CD4-positive, alpha-beta T cell (primary cell): ENCODE measurements at regions of chr16 and their contacts with region 1.

Region 1: GRCh38 chr16:75074920-75075687 is 41.5 kb downstream of the LDHD start:
- DNase-seq: peak; percentile 64 to 95 (median 80)
- ATAC-seq: peak; percentile 95
- H3K4me3 ChIP-seq: peak overlapping the region; percentile 32
- H3K4me3 Mint-ChIP-seq: peak overlapping the region; percentile 35
- H3K27ac ChIP-seq: peak overlapping the region; percentile 1 to 41
- H3K27ac Mint-ChIP-seq: peak overlapping the region; percentile 88
- H3K4me1 ChIP-seq: peaks cover 54% of the 10 kb centered on the region
- H3K4me1 Mint-ChIP-seq: peaks cover 66% of the 10 kb centered on the region
- H3K27me3 ChIP-seq: no peaks in the 10 kb centered on the region
- H3K27me3 Mint-ChIP-seq: no peaks in the 10 kb centered on the region
- CTCF ChIP-seq: no peak

Region 2: GRCh38 chr16:74984535-74985296 is 90.4 kb before region 1 on chr16 and contains the start of gene WDR59:
- CTCF ChIA-PET with region 1: interaction called, 6 read pairs
- POLR2A ChIA-PET with region 1: interaction called, 12 read pairs
- intact Hi-C with region 1: no loop called
- DNase-seq: peak; percentile 94 to 100 (median 98)
- ATAC-seq: peak; percentile 98
- H3K4me3 ChIP-seq: peak within 1 kb of the TSS; percentile 100
- H3K4me3 Mint-ChIP-seq: peak within 1 kb of the TSS; percentile 96
- H3K27ac ChIP-seq: peak within 1 kb of the TSS; percentile 44 to 61
- H3K27ac Mint-ChIP-seq: peak within 1 kb of the TSS; percentile 84
- H3K4me1 ChIP-seq: peaks cover 23% of the 10 kb centered on the region
- H3K4me1 Mint-ChIP-seq: peaks cover 23% of the 10 kb centered on the region
- H3K27me3 ChIP-seq: no peaks in the 10 kb centered on the region
- H3K27me3 Mint-ChIP-seq: no peaks in the 10 kb centered on the region
- CTCF ChIP-seq: no peak
- total RNA-seq, gene WDR59: 60.2 to 67.2 TPM

Region 3: GRCh38 chr16:75064403-75065148 is 10.5 kb before region 1 on chr16:
- CTCF ChIA-PET with region 1: interaction called, 3 read pairs
- POLR2A ChIA-PET with region 1: interaction called, 26 read pairs
- intact Hi-C with region 1: no loop called
- DNase-seq: peak in 5 of 14 experiments; percentile 6 to 47 (median 41)
- ATAC-seq: peak; percentile 55
- H3K4me3 ChIP-seq: peak overlapping the region; percentile 2
- H3K4me3 Mint-ChIP-seq: peak overlapping the region; percentile 72
- H3K27ac ChIP-seq: no peak overlapping the region
- H3K27ac Mint-ChIP-seq: peak overlapping the region; percentile 84
- H3K4me1 ChIP-seq: peaks cover 35% of the 10 kb centered on the region
- H3K4me1 Mint-ChIP-seq: peaks cover 72% of the 10 kb centered on the region
- H3K27me3 ChIP-seq: no peaks in the 10 kb centered on the region
- H3K27me3 Mint-ChIP-seq: no peaks in the 10 kb centered on the region
- CTCF ChIP-seq: no peak

Region 4: DNA sequence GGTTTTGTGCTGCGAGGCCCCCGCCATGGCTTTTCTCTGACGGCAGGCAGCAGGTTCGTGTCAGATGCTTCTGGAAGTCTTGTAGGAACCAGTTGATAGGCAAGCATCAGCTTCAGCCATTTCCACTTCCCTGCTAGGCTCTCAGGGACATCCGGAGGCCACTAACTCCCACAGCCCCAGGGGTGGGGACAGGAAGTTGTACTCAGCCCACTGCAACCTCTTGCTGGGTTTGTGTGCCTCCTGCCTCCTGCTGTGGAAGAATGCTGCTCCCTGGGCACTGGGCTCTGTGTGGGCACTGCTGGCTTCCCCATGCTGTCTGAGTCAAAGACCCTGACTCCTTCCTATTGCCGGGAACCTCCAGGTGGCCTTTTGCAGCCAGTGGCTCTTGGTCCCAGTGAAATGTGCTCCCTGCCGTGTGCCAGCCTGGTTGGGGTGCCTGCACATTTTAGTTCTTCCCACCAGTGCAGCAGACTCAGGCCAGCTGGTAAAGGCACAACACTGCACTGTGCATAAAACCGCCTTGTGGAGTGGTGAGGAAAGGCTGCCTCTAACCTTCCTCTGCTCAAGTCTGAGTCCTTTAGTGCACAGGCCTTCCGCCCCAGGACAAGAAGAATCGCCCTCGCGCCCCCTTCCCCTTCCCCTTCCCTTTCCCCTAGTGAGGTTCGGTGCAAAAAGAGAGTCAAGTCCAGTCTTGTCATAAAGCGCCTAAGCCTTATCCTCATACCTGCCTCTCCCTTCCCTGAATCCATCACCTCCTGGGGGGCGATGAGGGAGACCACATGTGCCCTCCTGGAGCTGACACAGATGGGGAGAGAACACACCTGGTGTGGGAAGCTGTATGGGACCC is 24.9 kb after region 1 on chr16:
- CTCF ChIA-PET with region 1: interaction called, 4 read pairs
- POLR2A ChIA-PET with region 1: interaction called, 14 read pairs
- intact Hi-C with region 1: loop called (anchors 1 to 2 kb)
- DNase-seq: peak in 10 of 14 experiments; percentile 20 to 77 (median 44)
- ATAC-seq: peak; percentile 30
- H3K4me3 ChIP-seq: no peak overlapping the region
- H3K4me3 Mint-ChIP-seq: peak overlapping the region; percentile 50
- H3K27ac ChIP-seq: peak overlapping the region; percentile 66
- H3K27ac Mint-ChIP-seq: peak overlapping the region; percentile 85
- H3K4me1 ChIP-seq: peaks cover 46% of the 10 kb centered on the region
- H3K4me1 Mint-ChIP-seq: peaks cover 52% of the 10 kb centered on the region
- H3K27me3 ChIP-seq: no peaks in the 10 kb centered on the region
- H3K27me3 Mint-ChIP-seq: no peaks in the 10 kb centered on the region
- CTCF ChIP-seq: no peak

Region 5: GRCh38 chr16:75148311-75149195 is 73.4 kb after region 1 on chr16 and contains the start of gene ZFP1:
- CTCF ChIA-PET with region 1: no interaction called
- POLR2A ChIA-PET with region 1: no interaction called
- intact Hi-C with region 1: loop called in 1 of 2 experiments (anchors 2 kb)
- DNase-seq: peak; percentile 91 to 96 (median 93)
- ATAC-seq: peak; percentile 91
- H3K4me3 ChIP-seq: peak within 1 kb of the TSS; percentile 82
- H3K4me3 Mint-ChIP-seq: peak within 1 kb of the TSS; percentile 94
- H3K27ac ChIP-seq: peak within 1 kb of the TSS; percentile 80 to 88
- H3K27ac Mint-ChIP-seq: peak within 1 kb of the TSS; percentile 88
- H3K4me1 ChIP-seq: peaks cover 9% of the 10 kb centered on the region
- H3K4me1 Mint-ChIP-seq: peaks cover 22% of the 10 kb centered on the region
- H3K27me3 ChIP-seq: no peaks in the 10 kb centered on the region
- H3K27me3 Mint-ChIP-seq: no peaks in the 10 kb centered on the region
- CTCF ChIP-seq: no peak
- total RNA-seq, gene ZFP1: 6.2 to 7.5 TPM